Lower leg skin (tissue), 4 donors: ENCODE measurements at regions of chr9 and their contacts with region 1.

Region 1: DNA sequence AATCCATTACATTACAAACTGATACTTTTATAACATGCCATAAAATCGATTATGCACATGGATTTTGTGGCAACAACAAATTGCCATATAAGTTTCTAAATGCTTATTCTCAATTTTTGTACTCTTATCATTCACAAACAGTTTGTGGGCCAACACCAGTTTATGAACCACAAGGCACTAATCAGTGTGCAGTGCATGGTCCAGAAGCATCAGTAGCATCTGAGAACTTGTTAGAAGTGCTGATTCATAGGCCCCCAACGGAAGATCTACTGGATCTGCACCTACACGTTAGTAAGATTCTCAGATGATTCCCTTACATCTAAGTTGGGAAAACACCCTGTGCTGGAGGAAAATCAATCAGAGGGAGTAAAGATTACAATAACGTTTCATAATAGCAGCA is 242.8 kb downstream of the TRPM3 start:
- DNase-seq: no peak
- H3K4me3 ChIP-seq: no peak overlapping the region
- CTCF ChIP-seq: no peak
- POLR2A ChIP-seq: no peak

Region 2: DNA sequence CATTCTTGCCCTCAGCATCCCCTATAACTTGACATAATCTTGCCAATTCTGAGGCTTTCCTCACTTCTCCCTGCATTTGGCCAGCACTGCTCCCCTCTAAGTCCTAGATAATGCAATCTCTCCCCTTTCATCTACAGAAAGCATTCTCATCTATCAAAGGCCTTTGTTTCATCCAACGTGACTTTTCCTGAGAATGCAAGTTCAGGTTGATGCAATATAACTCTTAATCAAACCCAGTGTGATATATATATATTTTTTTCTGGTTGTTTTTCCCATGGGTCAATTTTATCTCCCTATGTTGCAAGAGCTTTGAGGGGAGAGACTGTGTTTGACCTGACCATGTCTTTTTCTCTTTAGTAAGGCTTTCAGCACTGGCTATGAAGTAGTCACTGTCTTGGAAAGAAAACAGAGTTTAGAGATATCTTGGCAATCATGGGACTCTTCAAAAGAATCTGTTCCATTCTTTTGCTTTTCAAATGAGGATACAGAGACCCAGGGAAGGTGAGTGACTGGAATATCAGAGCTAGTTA is 25.8 kb before region 1 on chr9:
- intact Hi-C with region 1: loop called (anchors 2 kb)
- DNase-seq: no peak
- H3K4me3 ChIP-seq: no peak overlapping the region
- CTCF ChIP-seq: no peak
- POLR2A ChIP-seq: no peak